HCT116 (cell line): ENCODE measurements at regions of chr12 and their contacts with region 1.

Region 1: DNA sequence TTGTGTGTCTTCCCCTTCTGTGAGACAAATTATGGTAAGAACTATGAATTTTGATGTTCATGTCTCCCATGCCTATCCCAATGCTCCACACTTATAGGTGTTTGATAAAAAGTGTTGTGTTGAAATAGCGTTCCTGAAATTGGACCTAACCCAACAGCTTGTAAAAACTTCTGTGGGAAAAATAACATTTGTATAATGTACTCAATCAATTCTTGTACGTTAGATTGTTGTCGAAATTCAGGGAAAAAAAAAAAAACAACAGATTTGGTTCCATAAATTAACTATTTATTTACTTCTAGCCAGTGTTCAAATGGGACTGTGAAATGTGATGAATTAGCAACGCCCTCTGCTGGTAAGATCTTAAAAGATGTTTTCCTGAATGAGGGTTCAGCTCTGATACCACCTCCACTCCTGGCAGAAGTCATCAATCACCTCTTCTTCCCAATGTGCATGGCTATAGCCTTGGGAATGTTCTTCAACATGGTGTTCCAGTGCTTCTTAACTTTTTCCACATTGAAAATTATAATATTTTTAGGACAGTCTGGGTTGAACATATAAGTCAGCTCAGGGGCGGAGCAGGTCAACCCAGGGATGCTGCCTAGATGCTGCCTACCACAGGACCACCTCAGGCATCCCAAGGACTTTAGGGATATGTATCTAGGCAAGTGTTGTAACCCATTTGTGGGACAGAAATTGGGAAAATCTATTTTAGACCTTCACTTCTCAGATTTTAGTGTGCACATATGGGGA is 170.6 kb downstream of the OTOGL start:
- DNase-seq: peak; percentile 23
- ATAC-seq: peak; percentile 70
- H3K4me3 ChIP-seq: no peak overlapping the region
- H3K27ac ChIP-seq: no peak overlapping the region
- H3K4me1 ChIP-seq: peaks cover 9 to 17% of the 10 kb centered on the region in 2 experiments
- H3K27me3 ChIP-seq: no peaks in the 10 kb centered on the region
- CTCF ChIP-seq: peak; percentile 48 to 74 (median 59); a peak in 5 of 6 replicates
- POLR2A ChIP-seq: no peak
- RAD21 ChIP-seq: peak; percentile 74

Region 2: GRCh38 chr12:79407671-79408622 is 862.0 kb before region 1 on chr12:
- CTCF ChIA-PET with region 1: no interaction called
- POLR2A ChIA-PET with region 1: no interaction called
- RAD21 ChIA-PET with region 1: no interaction called
- intact Hi-C with region 1: loop called (anchors 1 kb)
- DNase-seq: peak; percentile 63
- ATAC-seq: peak; percentile 99
- H3K4me3 ChIP-seq: no peak overlapping the region
- H3K27ac ChIP-seq: no peak overlapping the region
- H3K4me1 ChIP-seq: no peaks in the 10 kb centered on the region
- H3K27me3 ChIP-seq: no peaks in the 10 kb centered on the region
- CTCF ChIP-seq: peak; percentile 54 to 79 (median 60); a peak in 5 of 6 replicates
- POLR2A ChIP-seq: no peak
- RAD21 ChIP-seq: peak; percentile 83

Region 3: GRCh38 chr12:79555028-79555930 is 714.7 kb before region 1 on chr12:
- CTCF ChIA-PET with region 1: no interaction called
- POLR2A ChIA-PET with region 1: no interaction called
- RAD21 ChIA-PET with region 1: no interaction called
- intact Hi-C with region 1: loop called (anchors 5 kb)
- DNase-seq: peak; percentile 26
- ATAC-seq: no peak
- H3K4me3 ChIP-seq: no peak overlapping the region
- H3K27ac ChIP-seq: no peak overlapping the region
- H3K4me1 ChIP-seq: no peaks in the 10 kb centered on the region; a peak in 1 of 4 replicates
- H3K27me3 ChIP-seq: no peaks in the 10 kb centered on the region
- CTCF ChIP-seq: peak; percentile 50 to 68 (median 66); a peak in 5 of 6 replicates
- POLR2A ChIP-seq: no peak
- RAD21 ChIP-seq: peak; percentile 85

Region 4: GRCh38 chr12:80195074-80195726 is 74.8 kb before region 1 on chr12:
- CTCF ChIA-PET with region 1: interaction called, 80 read pairs
- POLR2A ChIA-PET with region 1: interaction called, 4 read pairs
- RAD21 ChIA-PET with region 1: interaction called, 5 to 19 read pairs
- intact Hi-C with region 1: loop called (anchors 1 kb)
- DNase-seq: peak; percentile 36
- ATAC-seq: peak; percentile 85
- H3K4me3 ChIP-seq: no peak overlapping the region
- H3K27ac ChIP-seq: no peak overlapping the region
- H3K4me1 ChIP-seq: no peaks in the 10 kb centered on the region
- H3K27me3 ChIP-seq: no peaks in the 10 kb centered on the region
- CTCF ChIP-seq: peak; percentile 50 to 74 (median 73); a peak in 5 of 6 replicates
- POLR2A ChIP-seq: no peak
- RAD21 ChIP-seq: peak; percentile 65